ENCODE measurements at regions of chr16 and their contacts with region 1.

Region 1: GRCh38 chr16:86519649-86520316 is 9.5 kb downstream of the FOXF1 start:
- DNase-seq: peak; percentile 75
- H3K4me3 Mint-ChIP-seq: peak overlapping the region; percentile 61
- H3K27ac Mint-ChIP-seq: no peak overlapping the region
- H3K4me1 Mint-ChIP-seq: no peaks in the 10 kb centered on the region
- H3K27me3 Mint-ChIP-seq: peaks cover 98% of the 10 kb centered on the region
- CTCF ChIP-seq: peak; percentile 96

Region 2: GRCh38 chr16:86072328-86073102 is 447.3 kb before region 1 on chr16:
- CTCF ChIA-PET with region 1: interaction called, 11 read pairs
- intact Hi-C with region 1: loop called (anchors 2 kb)
- DNase-seq: peak; percentile 73
- H3K4me3 Mint-ChIP-seq: no peak overlapping the region
- H3K27ac Mint-ChIP-seq: no peak overlapping the region
- H3K4me1 Mint-ChIP-seq: no peaks in the 10 kb centered on the region
- H3K27me3 Mint-ChIP-seq: peaks cover 97% of the 10 kb centered on the region
- CTCF ChIP-seq: peak; percentile 71

Region 3: GRCh38 chr16:86343027-86343787 is 176.6 kb before region 1 on chr16:
- CTCF ChIA-PET with region 1: interaction called, 6 read pairs
- intact Hi-C with region 1: loop called (anchors 1 kb)
- DNase-seq: no peak
- H3K4me3 Mint-ChIP-seq: no peak overlapping the region
- H3K27ac Mint-ChIP-seq: no peak overlapping the region
- H3K4me1 Mint-ChIP-seq: no peaks in the 10 kb centered on the region
- H3K27me3 Mint-ChIP-seq: peaks cover 100% of the 10 kb centered on the region
- CTCF ChIP-seq: no peak

Region 4: DNA sequence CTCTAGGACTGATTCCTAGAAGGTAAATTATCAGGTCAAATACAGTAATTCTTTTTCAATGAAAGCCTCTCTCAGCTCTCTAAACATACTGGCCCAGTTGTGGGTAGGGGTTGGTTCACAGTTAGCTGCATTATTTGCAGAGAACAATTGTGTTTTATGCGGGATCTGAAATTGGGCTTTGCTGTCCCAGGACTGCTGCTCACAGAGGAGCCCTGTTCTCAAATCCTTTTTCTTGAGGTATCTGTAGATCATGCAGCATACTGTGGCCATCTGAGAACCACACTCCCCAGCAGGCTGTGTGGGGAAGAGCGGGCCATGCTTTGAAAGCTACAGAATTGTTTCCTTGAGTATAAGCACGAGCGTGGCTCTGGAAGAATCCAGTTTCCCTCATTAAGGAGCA is 17.7 kb after region 1 on chr16:
- CTCF ChIA-PET with region 1: no interaction called
- intact Hi-C with region 1: no loop called
- DNase-seq: no peak
- H3K4me3 Mint-ChIP-seq: no peak overlapping the region
- H3K27ac Mint-ChIP-seq: no peak overlapping the region
- H3K4me1 Mint-ChIP-seq: no peaks in the 10 kb centered on the region
- H3K27me3 Mint-ChIP-seq: no peaks in the 10 kb centered on the region
- CTCF ChIP-seq: no peak

Region 5: DNA sequence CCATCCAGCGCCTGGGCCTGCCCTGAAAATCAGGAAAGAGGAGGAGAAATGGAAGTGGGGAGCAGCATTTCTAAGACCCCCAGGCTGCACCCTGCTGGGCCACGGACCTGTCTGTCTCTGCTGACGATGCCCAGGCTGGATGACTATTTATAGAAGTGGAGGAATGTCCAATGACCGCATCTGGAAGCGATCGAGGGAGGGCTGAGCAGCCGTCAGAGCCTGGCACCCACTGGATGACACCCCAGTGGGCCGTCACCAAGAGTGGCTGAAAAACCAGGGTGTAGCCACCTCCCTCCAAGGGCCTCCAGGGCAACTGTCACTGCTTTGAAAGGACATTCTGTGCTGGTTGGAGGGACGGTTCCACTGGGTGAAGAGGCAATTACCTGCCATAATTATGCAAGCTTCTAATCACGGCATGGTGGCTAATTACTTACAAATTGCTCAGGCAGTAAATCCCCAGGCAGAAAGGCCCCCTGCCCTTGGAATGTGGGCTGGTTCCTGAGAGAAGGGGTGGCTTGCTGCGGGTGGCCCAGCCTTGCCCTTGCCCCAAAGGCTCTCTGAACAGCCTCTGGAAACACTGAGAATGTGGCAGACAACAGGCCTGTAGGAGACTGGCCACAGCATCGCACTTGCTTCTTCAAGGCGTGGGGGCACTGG is 465.3 kb after region 1 on chr16:
- CTCF ChIA-PET with region 1: no interaction called
- intact Hi-C with region 1: no loop called
- DNase-seq: no peak
- H3K4me3 Mint-ChIP-seq: no peak overlapping the region
- H3K27ac Mint-ChIP-seq: no peak overlapping the region
- H3K4me1 Mint-ChIP-seq: peaks cover 3% of the 10 kb centered on the region
- H3K27me3 Mint-ChIP-seq: peaks cover 60% of the 10 kb centered on the region
- CTCF ChIP-seq: no peak